BJ (cell line): ENCODE measurements at regions of chr9 and their contacts with region 1.

Region 1: GRCh38 chr9:131678499-131679111 is 61.3 kb downstream of the RAPGEF1 start:
- DNase-seq: peak; percentile 92
- H3K4me3 ChIP-seq: no peak overlapping the region
- H3K27me3 ChIP-seq: no peaks in the 10 kb centered on the region
- CTCF ChIP-seq: peak; percentile 7; the same call in 1 of the 2 replicates

Region 2: DNA sequence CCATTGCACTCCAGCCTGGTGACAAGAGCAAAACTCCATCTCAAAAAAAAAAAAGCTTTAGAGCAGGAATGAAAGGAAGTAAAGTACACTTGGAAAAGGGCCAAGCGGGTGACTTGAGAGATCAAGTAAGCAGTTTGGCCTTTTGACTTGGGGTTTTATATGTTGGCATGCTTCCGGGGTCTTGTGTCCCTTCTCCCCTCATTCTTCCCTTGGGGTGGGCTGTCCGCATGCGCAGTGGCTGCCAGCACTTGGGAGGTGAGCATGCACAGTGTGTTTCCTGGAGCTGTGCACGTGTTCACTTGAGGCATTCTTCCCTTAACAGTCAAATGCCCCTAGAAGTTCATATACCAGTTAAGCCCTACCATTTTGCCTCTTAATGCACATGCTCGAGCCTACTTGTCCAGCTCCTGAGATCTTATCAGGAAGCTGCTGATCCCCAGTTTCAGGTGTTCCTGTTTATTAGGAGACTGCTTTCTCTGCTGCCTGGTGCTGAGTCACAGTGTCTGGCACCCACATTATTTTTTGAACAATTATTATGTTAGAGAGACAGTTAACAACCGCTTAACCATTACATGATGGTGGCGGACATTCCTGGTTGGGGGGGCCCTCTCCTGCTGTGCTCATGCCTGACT is 317.3 kb before region 1 on chr9:
- CTCF ChIA-PET with region 1: no interaction called
- POLR2A ChIA-PET with region 1: no interaction called
- DNase-seq: no peak
- H3K4me3 ChIP-seq: no peak overlapping the region
- H3K27me3 ChIP-seq: no peaks in the 10 kb centered on the region
- CTCF ChIP-seq: no peak

Region 3: GRCh38 chr9:131621551-131622358 is 56.9 kb before region 1 on chr9:
- CTCF ChIA-PET with region 1: no interaction called
- POLR2A ChIA-PET with region 1: no interaction called
- DNase-seq: no peak
- H3K4me3 ChIP-seq: no peak overlapping the region
- H3K27me3 ChIP-seq: no peaks in the 10 kb centered on the region
- CTCF ChIP-seq: no peak

Region 4: DNA sequence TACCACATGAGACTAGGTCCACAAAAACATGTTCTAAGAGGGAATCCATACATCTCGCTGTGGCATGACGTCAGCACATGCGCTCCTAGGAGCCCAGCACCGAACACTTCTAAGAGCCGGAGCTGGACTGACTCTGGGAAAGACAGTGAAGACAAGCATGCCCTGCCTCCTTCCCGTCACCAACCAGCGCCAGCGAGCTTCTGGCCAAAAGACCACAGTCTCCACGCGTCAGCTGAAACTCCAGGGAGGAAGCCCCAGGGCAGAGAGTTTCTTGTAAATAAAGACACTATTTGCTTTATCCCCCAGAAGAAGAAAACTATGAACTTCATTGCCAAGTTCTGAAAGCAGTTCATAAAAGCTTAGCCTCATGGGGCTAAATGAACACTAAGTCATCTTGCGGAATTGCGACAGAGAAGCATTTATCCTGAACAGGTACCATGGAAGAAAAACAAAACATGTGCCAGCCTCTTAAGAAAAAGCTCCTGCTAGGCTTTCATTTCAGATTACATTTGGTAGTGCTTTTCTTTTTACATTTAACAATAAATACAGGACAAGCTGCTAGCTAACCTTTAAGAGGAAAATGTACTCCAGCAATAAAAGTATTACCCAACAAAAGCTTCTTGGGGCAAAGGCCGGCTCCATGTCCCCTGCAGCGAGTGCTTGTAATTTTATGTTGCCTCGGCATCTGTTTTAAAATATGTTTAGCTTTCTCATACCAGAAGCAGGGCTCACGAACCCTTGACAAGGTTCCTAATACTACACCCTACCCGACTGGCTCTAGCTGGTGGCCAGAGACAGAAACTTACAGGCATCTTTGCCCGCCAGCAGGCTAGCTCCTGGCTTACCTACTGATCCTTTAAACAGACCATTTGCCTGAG is 36.7 kb before region 1 on chr9:
- CTCF ChIA-PET with region 1: interaction called, 10 read pairs
- POLR2A ChIA-PET with region 1: interaction called, 3 read pairs
- DNase-seq: peak; percentile 78
- H3K4me3 ChIP-seq: no peak overlapping the region
- H3K27me3 ChIP-seq: no peaks in the 10 kb centered on the region
- CTCF ChIP-seq: peak; percentile 34